Activated T-helper 1 cell treated with anti-CD3 and anti-CD28 coated beads, Interleukin-12 subunit alpha, Interleukin-12 subunit beta, Interleukin-2, Interleukin-4 antibody, amounts not matched to agents 30 ng/mL and 10 ng/mL and 1 ng/mL, durations not matched to agents 14 hours and 24 hours and 36 hours (primary cell): ENCODE measurements at regions of chr6 and their contacts with region 1.

Region 1: DNA sequence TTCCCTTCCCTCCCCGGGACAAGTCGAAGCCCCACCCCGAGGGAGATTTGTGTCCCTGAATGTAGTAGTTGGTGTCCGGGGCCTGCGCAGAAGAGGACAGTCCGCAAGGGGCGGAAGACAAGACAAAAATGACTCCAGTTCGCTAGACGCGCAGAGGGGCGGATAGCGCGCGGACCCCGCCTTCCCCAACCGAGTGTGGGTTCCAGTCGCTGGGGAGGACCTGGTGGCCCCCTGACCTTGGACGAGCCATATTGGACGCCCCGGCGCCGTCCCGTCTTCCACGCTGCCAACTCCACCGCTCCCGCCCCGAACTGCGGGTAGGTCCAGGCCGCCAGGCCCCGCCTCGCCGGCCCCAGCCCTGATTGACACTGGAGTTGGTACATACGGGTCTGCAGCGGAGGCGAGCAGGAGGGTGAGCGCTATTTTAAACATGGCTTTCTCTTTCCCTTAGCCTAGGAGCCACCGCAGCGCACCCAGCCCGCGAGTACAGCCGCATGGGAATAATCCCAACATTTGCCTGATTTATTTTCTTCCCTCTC is 802 bp downstream of the HMGN3 start:
- DNase-seq: peak; percentile 72
- H3K4me3 Mint-ChIP-seq: peak overlapping the region; percentile 95
- H3K27ac Mint-ChIP-seq: peak overlapping the region; percentile 92
- H3K4me1 Mint-ChIP-seq: peaks cover 41% of the 10 kb centered on the region
- H3K27me3 Mint-ChIP-seq: no peaks in the 10 kb centered on the region

Region 2: GRCh38 chr6:78867370-78868040 is 366.2 kb before region 1 on chr6 and contains the start of gene IRAK1BP1:
- intact Hi-C with region 1: loop called (anchors 1 kb)
- DNase-seq: peak; percentile 79
- H3K4me3 Mint-ChIP-seq: peak within 1 kb of the TSS; percentile 97
- H3K27ac Mint-ChIP-seq: peak within 1 kb of the TSS; percentile 95
- H3K4me1 Mint-ChIP-seq: peaks cover 21% of the 10 kb centered on the region
- H3K27me3 Mint-ChIP-seq: peaks cover 2% of the 10 kb centered on the region
- total RNA-seq, gene IRAK1BP1: 3.0 TPM in 2 replicates

Region 3: GRCh38 chr6:79335133-79335674 is 101.5 kb after region 1 on chr6:
- intact Hi-C with region 1: loop called (anchors 1 kb)
- DNase-seq: no peak
- H3K4me3 Mint-ChIP-seq: no peak overlapping the region
- H3K27ac Mint-ChIP-seq: peak overlapping the region; percentile 18
- H3K4me1 Mint-ChIP-seq: peaks cover 14% of the 10 kb centered on the region
- H3K27me3 Mint-ChIP-seq: no peaks in the 10 kb centered on the region

Region 4: GRCh38 chr6:79536954-79537747 is 303.5 kb after region 1 on chr6 and contains the start of gene LCA5:
- intact Hi-C with region 1: loop called (anchors 1 kb)
- DNase-seq: peak; percentile 81
- H3K4me3 Mint-ChIP-seq: no peak within 1 kb of the TSS
- H3K27ac Mint-ChIP-seq: no peak within 1 kb of the TSS
- H3K4me1 Mint-ChIP-seq: no peaks in the 10 kb centered on the region
- H3K27me3 Mint-ChIP-seq: peaks cover 17% of the 10 kb centered on the region
- total RNA-seq, gene LCA5: 0.08 and 0.17 TPM in 2 replicates

Region 5: GRCh38 chr6:79672631-79673111 is 439.0 kb after region 1 on chr6:
- intact Hi-C with region 1: loop called (anchors 5 kb)
- DNase-seq: no peak
- H3K4me3 Mint-ChIP-seq: no peak overlapping the region
- H3K27ac Mint-ChIP-seq: no peak overlapping the region
- H3K4me1 Mint-ChIP-seq: peaks cover 23% of the 10 kb centered on the region
- H3K27me3 Mint-ChIP-seq: peaks cover 2% of the 10 kb centered on the region

Region 6: DNA sequence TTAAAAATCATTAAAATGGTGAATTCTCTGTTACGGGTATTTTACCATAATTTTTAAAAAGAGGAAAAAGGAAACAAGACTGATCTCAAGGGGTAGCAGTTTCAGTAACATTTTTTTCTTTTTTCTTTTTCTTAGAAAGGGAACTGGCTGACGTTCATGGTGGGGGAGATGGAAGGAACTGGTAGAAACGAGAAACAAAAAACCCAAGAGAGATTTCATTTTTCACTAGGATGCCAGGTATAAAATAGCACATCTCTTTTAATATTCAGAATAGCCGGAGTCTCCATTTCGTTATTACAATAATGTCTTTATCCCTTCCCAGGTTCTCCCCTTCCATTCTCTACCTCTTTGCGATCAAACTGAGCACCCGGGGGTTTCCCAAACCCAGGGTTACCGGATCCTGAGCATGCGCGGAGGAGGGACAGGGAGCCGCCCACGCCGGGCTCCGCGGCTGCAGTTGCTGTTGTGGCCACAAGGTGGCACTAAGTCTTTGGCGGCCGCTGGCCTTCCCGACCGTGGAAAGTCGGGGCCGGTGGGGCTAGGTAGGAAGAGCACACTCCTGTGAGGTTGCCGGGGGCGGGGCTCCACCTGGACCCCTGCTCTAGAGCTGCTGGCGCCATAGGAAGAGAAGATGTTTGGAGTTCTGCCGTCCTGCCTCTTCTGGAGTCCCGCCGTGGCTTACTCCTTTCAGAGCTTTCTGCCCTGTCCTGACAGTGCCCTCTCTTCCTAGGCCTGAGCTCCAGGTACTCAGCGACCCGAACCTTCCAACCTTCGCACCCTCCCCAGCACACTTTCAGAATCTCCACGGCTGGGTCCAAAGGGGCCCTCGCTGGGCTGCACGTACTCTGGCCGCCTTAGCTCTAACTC is 544.3 kb after region 1 on chr6:
- intact Hi-C with region 1: loop called (anchors 5 kb)
- DNase-seq: peak; percentile 85
- H3K4me3 Mint-ChIP-seq: peak overlapping the region; percentile 67
- H3K27ac Mint-ChIP-seq: peak overlapping the region; percentile 21
- H3K4me1 Mint-ChIP-seq: peaks cover 10% of the 10 kb centered on the region
- H3K27me3 Mint-ChIP-seq: no peaks in the 10 kb centered on the region

Region 7: GRCh38 chr6:80106418-80107235 is 872.9 kb after region 1 on chr6 and contains the start of gene BCKDHB:
- intact Hi-C with region 1: loop called (anchors 2 kb)
- DNase-seq: peak; percentile 98
- H3K4me3 Mint-ChIP-seq: peak within 1 kb of the TSS; percentile 96
- H3K27ac Mint-ChIP-seq: peak within 1 kb of the TSS; percentile 90
- H3K4me1 Mint-ChIP-seq: peaks cover 31% of the 10 kb centered on the region
- H3K27me3 Mint-ChIP-seq: peaks cover 2% of the 10 kb centered on the region
- total RNA-seq, gene BCKDHB: 13.3 and 14.4 TPM in 2 replicates